Vagina (tissue), 2 donors: ENCODE measurements at regions of chr14 and their contacts with region 1.

Region 1: GRCh38 chr14:73524493-73524892 is 12.4 kb upstream of the ACOT1 start:
- DNase-seq: no peak
- H3K4me3 ChIP-seq: no peak overlapping the region
- H3K27ac ChIP-seq: no peak overlapping the region
- H3K4me1 ChIP-seq: no peaks in the 10 kb centered on the region
- H3K27me3 ChIP-seq: no peaks in the 10 kb centered on the region
- CTCF ChIP-seq: no peak
- POLR2A ChIP-seq: no peak

Region 2: DNA sequence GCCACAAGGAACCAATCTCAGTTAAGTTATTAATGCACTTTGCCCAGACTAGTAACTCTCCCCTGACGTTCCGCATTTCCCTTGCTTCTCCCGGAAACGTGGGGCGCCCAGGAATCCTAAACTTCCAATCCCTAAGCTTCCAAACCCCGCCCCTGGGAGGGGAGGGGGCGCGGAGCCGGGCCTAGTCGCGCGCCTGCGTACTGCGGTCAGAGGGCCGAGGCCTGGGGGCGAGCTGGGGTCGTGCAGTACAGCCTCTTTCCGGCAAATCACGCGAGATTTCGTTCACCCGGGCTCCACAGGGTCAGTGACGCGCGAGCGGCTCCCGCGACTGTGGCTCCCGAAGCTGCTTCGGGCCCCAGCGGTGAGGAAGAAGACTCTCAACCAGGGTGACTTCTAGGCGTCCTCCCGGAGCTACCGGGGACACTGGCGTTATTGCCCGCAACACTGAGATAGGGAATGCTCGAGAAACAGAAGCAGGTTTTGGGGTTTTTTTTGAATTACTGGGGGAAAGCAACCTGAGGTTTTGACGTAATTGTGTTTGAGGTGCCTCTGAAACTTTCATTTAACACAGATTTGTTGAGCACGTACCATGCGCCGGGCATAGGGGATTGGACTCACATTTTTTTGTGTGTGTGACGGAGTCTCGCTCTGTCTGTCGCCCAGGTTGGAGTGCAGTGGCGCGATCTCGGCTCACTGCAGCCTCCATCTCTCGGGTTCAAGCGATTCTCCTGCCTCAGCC is 327.3 kb after region 1 on chr14 and contains the start of gene PTGR2:
- intact Hi-C with region 1: loop called (anchors 10 kb)
- DNase-seq: peak in 1 of 2 donors; percentile 96
- H3K4me3 ChIP-seq: peak within 1 kb of the TSS; percentile 50 to 60
- H3K27ac ChIP-seq: peak within 1 kb of the TSS; percentile 88
- H3K4me1 ChIP-seq: peaks cover 7% of the 10 kb centered on the region
- H3K27me3 ChIP-seq: no peaks in the 10 kb centered on the region
- CTCF ChIP-seq: peak in 1 of 3 experiments; percentile 36
- POLR2A ChIP-seq: peak in 1 of 2 donors; percentile 66
- total RNA-seq, gene PTGR2: 5.6 TPM